B cell (primary cell): ENCODE measurements at regions of chr1 and their contacts with region 1.

Region 1: GRCh38 chr1:23916209-23917131 is 3.3 kb upstream of the CNR2 start:
- DNase-seq: peak; percentile 86
- ATAC-seq: peak; percentile 53
- H3K4me3 ChIP-seq: peak overlapping the region in 2 of 5 experiments; percentile 22 to 50
- H3K4me3 Mint-ChIP-seq: peak overlapping the region; percentile 47
- H3K27ac ChIP-seq: peak overlapping the region; percentile 48 to 77
- H3K27ac Mint-ChIP-seq: peak overlapping the region; percentile 90
- H3K4me1 ChIP-seq: peaks cover 52 to 72% of the 10 kb centered on the region in 2 donors
- H3K4me1 Mint-ChIP-seq: peaks cover 64% of the 10 kb centered on the region
- H3K27me3 ChIP-seq: no peaks in the 10 kb centered on the region
- H3K27me3 Mint-ChIP-seq: no peaks in the 10 kb centered on the region
- CTCF ChIP-seq: peak; percentile 80

Region 2: GRCh38 chr1:23691499-23692307 is 224.8 kb before region 1 on chr1 and contains the start of gene RPL11:
- CTCF ChIA-PET with region 1: interaction called, 4 read pairs
- POLR2A ChIA-PET with region 1: interaction called, 3 read pairs
- intact Hi-C with region 1: loop called (anchors 5 kb)
- DNase-seq: peak; percentile 92
- ATAC-seq: peak; percentile 100
- H3K4me3 ChIP-seq: peak within 1 kb of the TSS; percentile 76 to 99 (median 77)
- H3K4me3 Mint-ChIP-seq: peak within 1 kb of the TSS; percentile 97
- H3K27ac ChIP-seq: peak within 1 kb of the TSS; percentile 79 to 84
- H3K27ac Mint-ChIP-seq: peak within 1 kb of the TSS; percentile 94
- H3K4me1 ChIP-seq: peaks cover 16 to 22% of the 10 kb centered on the region in 2 donors
- H3K4me1 Mint-ChIP-seq: peaks cover 48% of the 10 kb centered on the region
- H3K27me3 ChIP-seq: no peaks in the 10 kb centered on the region
- H3K27me3 Mint-ChIP-seq: no peaks in the 10 kb centered on the region
- CTCF ChIP-seq: peak; percentile 79
- total RNA-seq, gene RPL11: 1,439 and 1,539 TPM in 2 replicates

Region 3: GRCh38 chr1:23777979-23778814 is 138.3 kb before region 1 on chr1 and contains the start of gene PITHD1:
- CTCF ChIA-PET with region 1: interaction called, 52 read pairs
- POLR2A ChIA-PET with region 1: interaction called, 3 read pairs
- intact Hi-C with region 1: loop called (anchors 1 kb)
- DNase-seq: peak; percentile 92
- ATAC-seq: peak; percentile 88
- H3K4me3 ChIP-seq: peak within 1 kb of the TSS; percentile 60 to 91 (median 86)
- H3K4me3 Mint-ChIP-seq: peak within 1 kb of the TSS; percentile 91
- H3K27ac ChIP-seq: peak within 1 kb of the TSS; percentile 67 to 86
- H3K27ac Mint-ChIP-seq: peak within 1 kb of the TSS; percentile 90
- H3K4me1 ChIP-seq: peaks cover 15 to 20% of the 10 kb centered on the region in 2 donors
- H3K4me1 Mint-ChIP-seq: peaks cover 30% of the 10 kb centered on the region
- H3K27me3 ChIP-seq: no peaks in the 10 kb centered on the region
- H3K27me3 Mint-ChIP-seq: no peaks in the 10 kb centered on the region
- CTCF ChIP-seq: no peak
- total RNA-seq, gene PITHD1: 56.7 and 62.2 TPM in 2 replicates

Region 4: DNA sequence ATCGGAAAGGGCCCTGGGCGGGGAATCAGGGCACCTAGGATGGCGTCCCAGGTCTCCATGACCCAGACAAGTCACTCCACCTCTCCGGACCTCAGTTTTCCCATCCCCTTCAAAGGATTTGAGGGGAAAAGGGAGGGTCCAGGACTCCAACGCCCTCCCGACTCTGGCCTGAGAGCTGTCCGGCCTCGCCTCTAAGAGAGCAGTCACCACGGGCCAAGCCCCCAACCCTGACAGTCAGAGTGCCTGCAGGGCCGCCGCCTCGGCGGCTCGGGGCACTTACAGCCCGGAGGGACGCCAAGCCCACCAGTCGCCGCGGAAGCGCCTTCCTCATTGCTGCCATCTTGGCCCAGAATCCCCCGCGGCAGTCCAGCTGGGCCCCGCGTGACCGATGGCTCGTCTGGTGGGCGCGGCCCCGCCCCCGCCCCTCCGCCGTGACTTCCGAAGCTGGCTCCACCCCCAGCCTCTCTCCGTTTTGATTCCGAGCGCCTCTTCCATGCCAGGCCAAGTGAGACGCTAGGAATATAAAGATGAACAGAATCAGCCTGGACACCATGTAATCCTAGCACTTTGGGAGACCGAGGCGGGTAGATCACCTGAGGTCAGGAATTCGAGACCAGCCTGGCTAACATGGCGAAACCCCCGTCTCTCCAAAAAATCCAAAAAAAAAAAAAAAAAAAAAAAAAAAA is 91.3 kb before region 1 on chr1 and contains the start of gene HMGCL:
- CTCF ChIA-PET with region 1: interaction called, 6 read pairs
- POLR2A ChIA-PET with region 1: no interaction called
- intact Hi-C with region 1: loop called (anchors 5 kb)
- DNase-seq: peak; percentile 92
- ATAC-seq: peak; percentile 98
- H3K4me3 ChIP-seq: peak within 1 kb of the TSS; percentile 76 to 95 (median 93)
- H3K4me3 Mint-ChIP-seq: peak within 1 kb of the TSS; percentile 96
- H3K27ac ChIP-seq: peak within 1 kb of the TSS; percentile 81 to 97
- H3K27ac Mint-ChIP-seq: peak within 1 kb of the TSS; percentile 98
- H3K4me1 ChIP-seq: peaks cover 10 to 14% of the 10 kb centered on the region in 2 donors
- H3K4me1 Mint-ChIP-seq: peaks cover 22% of the 10 kb centered on the region
- H3K27me3 ChIP-seq: no peaks in the 10 kb centered on the region
- H3K27me3 Mint-ChIP-seq: no peaks in the 10 kb centered on the region
- CTCF ChIP-seq: no peak
- total RNA-seq, gene HMGCL: 35.9 and 41.2 TPM in 2 replicates

Region 5: GRCh38 chr1:23897083-23897482 is 19.4 kb before region 1 on chr1:
- CTCF ChIA-PET with region 1: interaction called, 20 read pairs
- POLR2A ChIA-PET with region 1: interaction called, 81 read pairs
- intact Hi-C with region 1: loop called (anchors 2 kb)
- DNase-seq: no peak
- ATAC-seq: no peak
- H3K4me3 ChIP-seq: no peak overlapping the region
- H3K4me3 Mint-ChIP-seq: no peak overlapping the region
- H3K27ac ChIP-seq: peak overlapping the region; percentile 64 to 72
- H3K27ac Mint-ChIP-seq: peak overlapping the region; percentile 91
- H3K4me1 ChIP-seq: peaks cover 75 to 86% of the 10 kb centered on the region in 2 donors
- H3K4me1 Mint-ChIP-seq: peaks cover 80% of the 10 kb centered on the region
- H3K27me3 ChIP-seq: no peaks in the 10 kb centered on the region
- H3K27me3 Mint-ChIP-seq: no peaks in the 10 kb centered on the region
- CTCF ChIP-seq: no peak

Region 6: DNA sequence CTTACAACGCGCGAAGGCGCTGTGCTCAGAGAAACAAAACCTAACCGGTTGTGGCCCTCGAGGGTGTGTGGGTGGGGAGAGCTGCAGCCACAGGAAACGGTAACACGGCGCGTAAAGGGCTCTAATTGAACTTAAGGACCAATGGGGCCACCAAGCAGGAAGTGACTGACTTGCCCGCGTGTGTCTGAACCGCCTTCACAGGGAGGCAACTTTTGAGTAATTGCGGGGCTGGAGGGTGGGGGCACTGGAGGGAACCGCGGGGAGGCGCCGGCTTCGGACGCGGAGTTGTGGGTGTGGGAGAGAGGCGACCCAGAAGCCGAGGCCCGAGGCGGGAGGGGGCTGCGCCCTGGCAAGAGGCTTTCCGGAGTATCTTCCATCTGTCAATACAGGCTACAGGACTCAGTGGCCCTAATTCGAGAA is 42.6 kb after region 1 on chr1:
- CTCF ChIA-PET with region 1: interaction called, 40 read pairs
- POLR2A ChIA-PET with region 1: interaction called, 10 read pairs
- intact Hi-C with region 1: loop called (anchors 1 kb)
- DNase-seq: peak; percentile 97
- ATAC-seq: peak; percentile 73
- H3K4me3 ChIP-seq: peak overlapping the region; percentile 63 to 98 (median 97)
- H3K4me3 Mint-ChIP-seq: peak overlapping the region; percentile 100
- H3K27ac ChIP-seq: peak overlapping the region; percentile 93 to 98
- H3K27ac Mint-ChIP-seq: peak overlapping the region; percentile 100
- H3K4me1 ChIP-seq: peaks cover 51 to 57% of the 10 kb centered on the region in 2 donors
- H3K4me1 Mint-ChIP-seq: peaks cover 70% of the 10 kb centered on the region
- H3K27me3 ChIP-seq: no peaks in the 10 kb centered on the region
- H3K27me3 Mint-ChIP-seq: no peaks in the 10 kb centered on the region
- CTCF ChIP-seq: peak; percentile 1